ENCODE measurements at regions of chr15 and their contacts with region 1.

Region 1: DNA sequence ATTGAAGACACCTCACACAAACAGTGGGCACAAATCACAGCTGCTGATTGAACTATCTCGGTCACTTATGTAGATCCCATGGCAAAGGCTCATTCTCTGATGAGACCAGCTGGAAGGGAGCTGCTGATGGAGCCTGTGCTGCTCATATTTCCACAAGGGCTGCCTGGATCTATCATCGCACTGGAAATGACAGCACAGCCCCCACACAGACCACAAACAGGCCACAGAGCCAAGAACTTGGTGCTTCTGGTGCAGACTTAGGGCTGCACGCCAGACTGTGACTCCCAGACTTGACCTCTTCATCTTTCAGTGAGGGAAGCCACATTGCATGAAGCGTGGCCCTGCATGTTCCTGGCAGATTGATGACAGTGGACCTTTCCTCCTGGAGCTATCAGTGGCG is 197.6 kb downstream of the MINAR1 start:
- DNase-seq: no peak
- H3K4me3 Mint-ChIP-seq: no peak overlapping the region
- H3K27ac Mint-ChIP-seq: no peak overlapping the region
- H3K4me1 Mint-ChIP-seq: no peaks in the 10 kb centered on the region
- H3K27me3 Mint-ChIP-seq: peaks cover 60% of the 10 kb centered on the region
- CTCF ChIP-seq: no peak

Region 2: GRCh38 chr15:79615754-79616153 is 13.9 kb before region 1 on chr15:
- CTCF ChIA-PET with region 1: interaction called, 12 read pairs
- intact Hi-C with region 1: no loop called
- DNase-seq: no peak
- H3K4me3 Mint-ChIP-seq: no peak overlapping the region
- H3K27ac Mint-ChIP-seq: no peak overlapping the region
- H3K4me1 Mint-ChIP-seq: no peaks in the 10 kb centered on the region
- H3K27me3 Mint-ChIP-seq: peaks cover 7% of the 10 kb centered on the region
- CTCF ChIP-seq: no peak

Measured in Calu3 (cell line).